IMR-90 (cell line): ENCODE measurements at regions of chr1 and their contacts with region 1.

Region 1: GRCh38 chr1:225766967-225767633 is 10.5 kb upstream of the SRP9 start:
- DNase-seq: peak; percentile 90
- ATAC-seq: peak; percentile 59
- H3K4me3 ChIP-seq: no peak overlapping the region
- H3K27ac ChIP-seq: peak overlapping the region; percentile 85
- H3K4me1 ChIP-seq: peaks cover 36% of the 10 kb centered on the region
- H3K27me3 ChIP-seq: no peaks in the 10 kb centered on the region
- CTCF ChIP-seq: no peak
- POLR2A ChIP-seq: no peak
- RAD21 ChIP-seq: peak; percentile 9; the same call in 1 of the 2 replicates

Region 2: DNA sequence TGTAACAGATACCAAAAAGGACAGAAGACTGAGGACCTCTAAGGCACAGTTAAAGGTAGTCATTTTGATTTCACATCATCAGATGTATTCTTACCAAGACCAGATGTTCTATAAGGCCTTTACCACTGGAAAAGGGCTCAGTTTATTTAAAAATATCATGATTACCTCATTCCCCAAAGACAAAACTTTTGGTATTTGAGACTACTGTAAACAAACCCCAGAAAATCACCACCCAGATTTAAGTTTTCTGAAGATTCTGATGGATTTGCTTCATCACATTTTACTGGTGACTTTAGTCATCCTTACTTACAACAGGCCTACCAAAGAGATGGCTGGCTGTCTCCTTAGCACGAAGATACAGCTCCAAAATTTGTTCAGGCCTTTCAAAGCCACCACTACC is 122.4 kb before region 1 on chr1:
- CTCF ChIA-PET with region 1: interaction called, 3 read pairs
- POLR2A ChIA-PET with region 1: interaction called, 4 read pairs
- dilution Hi-C with region 1: no loop called
- in situ Hi-C with region 1: loop called (anchors 5 kb)
- intact Hi-C with region 1: no loop called
- DNase-seq: peak; percentile 65
- ATAC-seq: peak; percentile 33; the same call in 1 of the 2 replicates
- H3K4me3 ChIP-seq: no peak overlapping the region
- H3K27ac ChIP-seq: peak overlapping the region; percentile 32; the same call in 1 of the 2 replicates
- H3K4me1 ChIP-seq: peaks cover 6% of the 10 kb centered on the region
- H3K27me3 ChIP-seq: no peaks in the 10 kb centered on the region
- CTCF ChIP-seq: no peak
- POLR2A ChIP-seq: no peak
- RAD21 ChIP-seq: no peak

Region 3: GRCh38 chr1:225746361-225747179 is 20.5 kb before region 1 on chr1:
- CTCF ChIA-PET with region 1: interaction called, 3 read pairs
- POLR2A ChIA-PET with region 1: interaction called, 24 read pairs
- dilution Hi-C with region 1: no loop called
- in situ Hi-C with region 1: no loop called
- intact Hi-C with region 1: no loop called
- DNase-seq: peak; percentile 90
- ATAC-seq: peak; percentile 98
- H3K4me3 ChIP-seq: peak overlapping the region; percentile 35
- H3K27ac ChIP-seq: peak overlapping the region; percentile 84
- H3K4me1 ChIP-seq: no peaks in the 10 kb centered on the region; the same call in 1 of the 2 replicates
- H3K27me3 ChIP-seq: 0 out of 2 replicates have a peak, but pooled peaks cover 2% of the 10 kb centered on the region
- CTCF ChIP-seq: no peak
- POLR2A ChIP-seq: peak; percentile 49; the same call in 1 of the 2 replicates
- RAD21 ChIP-seq: no peak

Region 4: DNA sequence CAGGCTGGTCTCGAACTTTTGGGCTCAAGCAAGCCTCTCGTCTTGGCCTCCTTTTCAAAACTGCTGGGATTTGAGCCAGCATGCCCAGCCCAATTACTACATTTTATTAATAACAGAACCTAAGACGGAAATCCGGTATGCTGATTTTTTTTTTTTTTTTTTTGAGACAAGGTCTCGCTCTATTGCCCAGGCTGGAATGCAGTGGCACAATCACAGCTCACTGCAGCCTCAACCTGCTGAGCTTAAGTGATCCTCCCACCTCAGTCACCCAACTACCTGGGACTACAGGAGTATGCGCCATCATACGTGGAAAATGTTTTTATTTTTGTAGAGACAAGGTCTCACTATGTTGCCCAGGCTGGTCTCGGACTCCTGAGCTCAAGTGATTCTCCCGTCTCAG is 399.2 kb after region 1 on chr1:
- CTCF ChIA-PET with region 1: no interaction called
- POLR2A ChIA-PET with region 1: no interaction called
- dilution Hi-C with region 1: no loop called
- in situ Hi-C with region 1: no loop called
- intact Hi-C with region 1: no loop called
- DNase-seq: no peak
- ATAC-seq: no peak
- H3K4me3 ChIP-seq: no peak overlapping the region
- H3K27ac ChIP-seq: no peak overlapping the region
- H3K4me1 ChIP-seq: no peaks in the 10 kb centered on the region
- H3K27me3 ChIP-seq: no peaks in the 10 kb centered on the region
- CTCF ChIP-seq: no peak
- POLR2A ChIP-seq: no peak
- RAD21 ChIP-seq: no peak